ENCODE measurements at regions of chr1 and their contacts with region 1.

Region 1: GRCh38 chr1:158998781-158999161 is 10.9 kb upstream of the IFI16 start:
- DNase-seq: peak in 1 of 3 donors; percentile 42
- ATAC-seq: peak; percentile 62 to 80 (median 72)
- H3K4me3 ChIP-seq: peak overlapping the region; percentile 14 to 39 (median 28)
- H3K27ac ChIP-seq: peak overlapping the region; percentile 34 to 65 (median 55)
- H3K4me1 ChIP-seq: peaks cover 0 to 14% (median 0%) of the 10 kb centered on the region in 4 donors
- H3K27me3 ChIP-seq: no peaks in the 10 kb centered on the region
- CTCF ChIP-seq: peak; percentile 87 to 92 (median 90)
- POLR2A ChIP-seq: no peak

Region 2: DNA sequence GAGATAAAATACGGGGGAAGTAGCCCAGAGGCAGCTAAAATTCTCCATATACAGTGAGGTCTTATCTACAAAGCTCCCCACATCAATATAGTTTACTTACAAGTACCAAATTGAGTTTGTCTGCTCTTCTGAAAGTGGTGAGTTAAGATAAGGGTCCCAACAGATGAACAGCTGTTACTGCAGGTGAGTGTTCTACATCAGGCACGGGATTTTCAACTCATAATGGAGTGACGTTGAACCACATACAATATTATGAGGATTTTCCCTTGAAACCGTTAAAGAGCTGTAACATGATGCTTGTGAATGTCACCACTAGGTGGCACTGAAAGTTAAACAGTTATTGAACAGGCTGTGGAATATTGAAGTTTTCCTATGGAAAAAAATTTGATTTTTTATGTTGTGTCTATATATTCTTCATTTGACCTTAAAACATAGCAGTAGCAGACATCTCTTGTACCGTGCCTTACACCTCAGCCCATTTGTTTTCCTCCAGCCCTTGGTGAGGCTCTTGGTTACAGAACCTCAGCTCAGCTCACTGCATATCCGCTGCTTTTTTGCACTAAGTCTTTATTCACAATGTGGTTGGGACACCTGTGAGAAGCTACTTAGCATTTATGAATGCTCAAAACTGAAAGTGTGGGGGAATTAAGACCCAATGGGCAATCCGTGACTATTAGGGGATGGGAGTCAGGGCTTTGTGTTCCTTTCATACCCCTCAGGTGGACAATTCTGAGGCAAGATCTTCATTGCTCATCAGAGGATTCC is 794.9 kb before region 1 on chr1:
- intact Hi-C with region 1: loop called in 1 of 2 experiments (anchors 10 kb)
- DNase-seq: no peak
- ATAC-seq: peak; percentile 84 to 92 (median 89)
- H3K4me3 ChIP-seq: no peak overlapping the region
- H3K27ac ChIP-seq: no peak overlapping the region
- H3K4me1 ChIP-seq: no peaks in the 10 kb centered on the region
- H3K27me3 ChIP-seq: peaks cover 0 to 3% of the 10 kb centered on the region in 2 donors
- CTCF ChIP-seq: peak; percentile 73 to 85 (median 81)
- POLR2A ChIP-seq: no peak

Region 3: DNA sequence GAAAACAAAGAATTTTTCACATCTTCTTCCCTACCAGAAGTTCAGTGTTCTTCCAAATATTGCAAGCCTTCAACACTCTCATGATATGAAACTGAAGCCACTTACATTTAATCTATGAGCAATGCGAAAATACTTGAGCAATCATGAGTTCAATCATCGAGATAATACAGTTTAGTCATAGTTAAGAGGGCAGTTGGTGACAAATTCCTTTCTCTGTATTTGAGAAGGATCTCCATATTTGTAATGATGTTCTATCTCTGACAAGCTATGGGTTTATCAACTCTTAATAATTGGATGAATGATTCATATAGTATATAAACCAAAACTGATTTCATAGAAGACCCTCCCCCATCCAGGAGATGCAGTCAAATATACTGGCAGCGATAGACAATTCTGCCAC is 97.1 kb before region 1 on chr1:
- intact Hi-C with region 1: no loop called
- DNase-seq: no peak
- ATAC-seq: no peak
- H3K4me3 ChIP-seq: no peak overlapping the region
- H3K27ac ChIP-seq: no peak overlapping the region
- H3K4me1 ChIP-seq: no peaks in the 10 kb centered on the region
- H3K27me3 ChIP-seq: no peaks in the 10 kb centered on the region
- CTCF ChIP-seq: no peak
- POLR2A ChIP-seq: no peak

Region 4: DNA sequence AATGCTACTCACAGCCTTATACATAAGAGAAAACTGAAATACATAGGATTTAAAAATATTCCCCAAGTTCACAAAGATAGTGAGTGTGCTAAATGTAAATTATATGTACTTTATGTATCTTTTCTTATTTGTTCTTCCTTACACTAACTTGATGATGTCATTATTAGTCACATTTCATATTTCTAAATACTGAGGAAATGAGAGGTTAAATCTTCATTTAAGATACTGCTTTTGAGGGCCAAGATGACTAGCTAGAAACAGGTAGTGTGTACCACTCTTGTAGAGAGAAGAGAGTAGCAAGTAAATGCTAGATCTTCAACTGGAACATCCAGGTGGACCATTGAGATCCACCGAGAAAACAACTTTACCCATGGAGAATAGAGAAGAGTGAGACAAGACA is 37.6 kb before region 1 on chr1:
- intact Hi-C with region 1: no loop called
- DNase-seq: no peak
- ATAC-seq: no peak
- H3K4me3 ChIP-seq: no peak overlapping the region
- H3K27ac ChIP-seq: no peak overlapping the region
- H3K4me1 ChIP-seq: no peaks in the 10 kb centered on the region
- H3K27me3 ChIP-seq: no peaks in the 10 kb centered on the region
- CTCF ChIP-seq: no peak
- POLR2A ChIP-seq: no peak

Region 5: DNA sequence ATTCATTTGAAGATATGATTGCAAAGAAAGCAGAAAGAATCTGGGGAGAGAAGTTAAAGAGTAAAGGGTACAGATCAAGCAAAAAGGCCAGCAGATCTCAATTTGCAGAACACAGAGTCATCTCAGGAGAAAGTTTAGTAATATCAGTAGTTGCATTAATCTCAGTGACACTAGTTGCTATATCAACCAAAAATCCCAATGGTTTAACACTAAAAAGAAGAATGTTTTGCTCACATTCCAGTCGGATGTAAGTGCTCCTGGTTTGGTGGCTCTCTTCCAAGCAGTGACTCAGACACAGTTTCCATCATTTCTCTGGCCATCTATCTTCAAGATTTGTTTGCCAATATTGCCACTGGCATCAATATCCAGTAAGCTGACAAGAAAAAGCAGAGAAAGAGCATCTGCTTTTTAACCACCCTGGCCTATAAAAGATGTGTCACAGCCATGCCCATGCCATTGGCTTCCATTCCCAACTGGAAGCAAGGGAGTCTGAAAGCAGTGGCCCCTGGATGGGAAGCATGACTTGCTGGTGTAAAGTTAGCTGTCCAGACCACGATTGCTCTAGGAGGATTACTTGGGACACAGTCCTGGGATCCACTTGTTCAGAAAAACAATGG is 123.3 kb after region 1 on chr1:
- intact Hi-C with region 1: no loop called
- DNase-seq: no peak
- ATAC-seq: no peak
- H3K4me3 ChIP-seq: no peak overlapping the region
- H3K27ac ChIP-seq: no peak overlapping the region
- H3K4me1 ChIP-seq: no peaks in the 10 kb centered on the region
- H3K27me3 ChIP-seq: no peaks in the 10 kb centered on the region
- CTCF ChIP-seq: no peak
- POLR2A ChIP-seq: no peak

Measured in right lobe of liver (tissue), 6 donors.